ENCODE measurements at regions of chr17 and their contacts with region 1.

Region 1: GRCh38 chr17:57955183-57955931 is at the start of gene CUEDC1:
- DNase-seq: no peak
- H3K4me3 ChIP-seq: peak within 1 kb of the TSS; percentile 67 to 92 (median 88)
- H3K27ac ChIP-seq: peak within 1 kb of the TSS; percentile 93 to 98 (median 95)
- H3K4me1 ChIP-seq: peaks cover 35 to 58% (median 38%) of the 10 kb centered on the region in 3 donors
- H3K27me3 ChIP-seq: no peaks in the 10 kb centered on the region
- CTCF ChIP-seq: peak in 2 of 6 experiments; percentile 39 to 57
- POLR2A ChIP-seq: no peak
- total RNA-seq, gene CUEDC1: 7.4 to 27.3 (median 18.4) TPM

Region 2: DNA sequence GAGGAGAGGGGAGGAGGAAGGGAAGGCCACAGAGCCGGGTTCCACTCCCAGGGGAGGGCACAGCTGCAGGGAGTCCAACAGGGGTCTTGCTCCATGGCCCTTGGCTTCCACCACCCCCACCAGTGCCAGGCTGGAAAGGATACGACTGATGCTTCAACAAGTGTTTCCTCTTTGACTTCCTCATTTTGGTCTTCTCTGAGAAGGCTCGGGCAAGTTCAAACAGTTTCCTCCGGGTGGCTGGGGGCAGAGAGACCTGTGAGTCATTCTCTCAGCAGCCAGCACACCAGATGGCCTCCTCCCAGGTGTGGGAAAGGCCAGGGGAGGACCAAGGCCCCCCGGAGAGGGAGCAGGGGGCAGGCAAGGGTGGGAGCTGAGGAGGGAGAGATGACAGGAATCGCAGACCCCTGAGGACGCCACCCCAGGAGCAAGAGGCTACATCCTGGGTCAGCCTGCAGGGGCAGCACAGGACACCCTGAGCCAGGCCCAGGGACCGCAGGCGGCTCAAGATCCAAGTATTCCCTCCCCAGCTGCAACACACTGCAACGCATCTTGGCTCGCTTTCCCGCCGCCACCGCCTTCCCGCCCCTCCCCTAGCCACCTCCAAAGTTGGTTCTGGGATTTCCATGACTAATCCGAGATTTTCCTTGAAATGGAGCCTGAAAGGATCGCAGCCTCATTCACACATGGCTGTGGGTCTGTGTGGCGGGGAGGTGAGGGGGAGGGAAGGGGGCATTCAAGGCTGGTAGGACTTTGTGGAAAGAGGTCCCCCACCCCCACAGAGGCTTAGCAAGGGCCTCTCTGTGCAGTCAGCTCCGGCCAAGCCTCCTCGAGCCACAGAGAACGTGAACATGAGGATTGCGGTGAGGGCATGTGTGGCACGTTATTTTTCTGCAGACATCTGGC is 87.1 kb before region 1 on chr17:
- intact Hi-C with region 1: loop called (anchors 10 kb)
- DNase-seq: peak; percentile 32
- H3K4me3 ChIP-seq: peak overlapping the region in 1 of 4 donors; percentile 10
- H3K27ac ChIP-seq: peak overlapping the region; percentile 73 to 90 (median 84)
- H3K4me1 ChIP-seq: peaks cover 35 to 63% (median 41%) of the 10 kb centered on the region in 3 donors
- H3K27me3 ChIP-seq: no peaks in the 10 kb centered on the region
- CTCF ChIP-seq: peak in 4 of 6 experiments; percentile 27 to 47 (median 39)
- POLR2A ChIP-seq: no peak

Region 3: GRCh38 chr17:58043221-58044181 is 88.1 kb after region 1 on chr17:
- intact Hi-C with region 1: no loop called
- DNase-seq: no peak
- H3K4me3 ChIP-seq: no peak overlapping the region
- H3K27ac ChIP-seq: no peak overlapping the region
- H3K4me1 ChIP-seq: peaks cover 0 to 10% (median 0%) of the 10 kb centered on the region in 3 donors
- H3K27me3 ChIP-seq: peaks cover 0 to 8% (median 0%) of the 10 kb centered on the region in 4 donors
- CTCF ChIP-seq: no peak
- POLR2A ChIP-seq: no peak